Activated T-helper 1 cell treated with anti-CD3 and anti-CD28 coated beads, Interleukin-12 subunit alpha, Interleukin-12 subunit beta, Interleukin-2, Interleukin-4 antibody, amounts not matched to agents 30 ng/mL and 10 ng/mL and 1 ng/mL, durations not matched to agents 14 hours and 24 hours and 36 hours (primary cell): ENCODE measurements at regions of chr3 and their contacts with region 1.

Region 1: GRCh38 chr3:40980467-40980866 is 218.8 kb upstream of the CTNNB1 start:
- DNase-seq: peak; percentile 33
- H3K4me3 Mint-ChIP-seq: peak overlapping the region; percentile 19
- H3K27ac Mint-ChIP-seq: peak overlapping the region; percentile 57
- H3K4me1 Mint-ChIP-seq: peaks cover 25% of the 10 kb centered on the region
- H3K27me3 Mint-ChIP-seq: peaks cover 32% of the 10 kb centered on the region

Region 2: DNA sequence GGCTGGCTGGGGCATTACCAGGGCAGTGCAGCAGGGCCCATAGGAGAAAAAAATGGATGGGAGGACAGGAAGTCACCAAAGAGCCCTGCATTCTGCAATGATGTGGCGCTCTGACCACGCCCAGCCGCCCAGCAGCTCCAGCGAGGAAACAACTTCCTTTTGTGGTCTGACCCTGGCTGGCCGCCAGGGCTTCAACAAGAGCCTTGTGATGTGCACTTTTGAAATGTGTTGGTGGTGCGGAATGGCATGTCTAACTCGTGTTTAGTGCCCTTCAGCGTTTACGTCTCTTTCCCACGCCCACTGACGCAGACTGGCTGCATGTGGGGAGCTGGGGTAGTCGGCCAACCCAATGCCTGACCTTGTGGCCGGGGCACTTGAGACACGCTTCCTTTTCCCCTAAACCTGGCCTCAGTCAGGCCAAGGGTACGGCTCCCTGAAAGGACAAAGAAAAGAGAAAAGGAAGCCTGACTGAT is 137.0 kb after region 1 on chr3:
- intact Hi-C with region 1: loop called (anchors 1 kb)
- DNase-seq: peak; percentile 70
- H3K4me3 Mint-ChIP-seq: no peak overlapping the region
- H3K27ac Mint-ChIP-seq: peak overlapping the region; percentile 67
- H3K4me1 Mint-ChIP-seq: peaks cover 24% of the 10 kb centered on the region
- H3K27me3 Mint-ChIP-seq: no peaks in the 10 kb centered on the region

Region 3: DNA sequence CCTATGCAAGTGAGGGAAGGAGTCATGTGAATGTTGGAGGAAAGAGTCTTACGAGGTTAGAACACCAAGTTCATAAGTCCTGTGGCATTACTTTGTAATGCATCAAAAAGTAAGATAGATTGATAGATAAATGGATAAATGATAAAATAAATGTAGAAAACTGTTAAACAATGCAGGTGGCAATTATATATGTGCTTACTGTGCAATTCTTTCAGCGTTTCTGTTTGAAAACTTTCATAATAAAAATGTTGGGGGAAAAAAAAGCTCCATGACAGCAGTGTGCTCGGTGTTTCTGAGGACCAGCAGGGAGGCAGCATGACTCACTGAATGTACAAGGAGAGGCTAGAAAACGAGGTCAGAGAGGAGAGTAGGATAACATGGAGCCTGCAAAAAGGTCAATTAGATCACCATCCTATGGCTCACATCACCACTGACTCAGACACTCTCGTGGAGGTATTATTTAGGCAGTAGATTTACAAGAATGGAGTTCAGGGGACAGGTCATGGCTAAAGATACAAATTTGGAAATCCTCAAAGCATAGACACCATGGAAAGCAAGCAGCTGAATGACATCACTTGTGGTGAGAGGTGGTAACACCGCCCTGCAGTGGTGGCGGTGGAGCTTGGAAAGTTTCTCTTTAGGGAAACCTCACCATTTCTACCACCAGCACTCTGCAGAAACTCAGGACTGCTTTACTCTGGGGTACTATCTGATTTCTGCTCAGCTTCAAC is 438.7 kb after region 1 on chr3:
- intact Hi-C with region 1: loop called (anchors 5 kb)
- DNase-seq: peak; percentile 39
- H3K4me3 Mint-ChIP-seq: peak overlapping the region; percentile 20
- H3K27ac Mint-ChIP-seq: peak overlapping the region; percentile 53
- H3K4me1 Mint-ChIP-seq: peaks cover 29% of the 10 kb centered on the region
- H3K27me3 Mint-ChIP-seq: peaks cover 4% of the 10 kb centered on the region